ENCODE measurements at regions of chr7 and their contacts with region 1.

Region 1: GRCh38 chr7:112449902-112450806 is at the start of gene IFRD1:
- DNase-seq: peak; percentile 94
- ATAC-seq: peak; percentile 83
- H3K4me3 ChIP-seq: peak within 1 kb of the TSS; percentile 95
- H3K27ac ChIP-seq: peak within 1 kb of the TSS; percentile 92
- H3K4me1 ChIP-seq: peaks cover 4% of the 10 kb centered on the region; the same call in 1 of the 2 replicates
- H3K27me3 ChIP-seq: no peaks in the 10 kb centered on the region
- CTCF ChIP-seq: no peak
- EP300 ChIP-seq: no peak
- POLR2A ChIP-seq: peak; percentile 98
- RAD21 ChIP-seq: no peak
- polyA plus RNA-seq, gene IFRD1: 9.6 to 12.0 TPM

Region 2: GRCh38 chr7:112206238-112207044 is 243.7 kb before region 1 on chr7 and contains the starts of genes DOCK4 and ZNF277:
- CTCF ChIA-PET with region 1: interaction called, 4 read pairs
- POLR2A ChIA-PET with region 1: interaction called, 7 read pairs
- RAD21 ChIA-PET with region 1: interaction called, 3 read pairs
- SMC1A ChIA-PET with region 1: interaction called, 3 read pairs
- in situ Hi-C with region 1: loop called (anchors 5 kb)
- intact Hi-C with region 1: loop called (anchors 2 kb)
- DNase-seq: peak; percentile 94
- ATAC-seq: peak; percentile 94
- H3K4me3 ChIP-seq: peak within 1 kb of the TSS; percentile 94
- H3K27ac ChIP-seq: peak within 1 kb of the TSS; percentile 63
- H3K4me1 ChIP-seq: no peaks in the 10 kb centered on the region; the same call in 1 of the 2 replicates
- H3K27me3 ChIP-seq: no peaks in the 10 kb centered on the region
- CTCF ChIP-seq: no peak
- EP300 ChIP-seq: no peak
- POLR2A ChIP-seq: peak; percentile 69
- RAD21 ChIP-seq: no peak
- polyA plus RNA-seq, gene DOCK4: 0.03 to 0.05 TPM
- polyA plus RNA-seq, gene ZNF277: 23.5 to 28.7 TPM

Region 3: GRCh38 chr7:112398534-112398933 is 51.6 kb before region 1 on chr7:
- CTCF ChIA-PET with region 1: no interaction called
- POLR2A ChIA-PET with region 1: no interaction called
- RAD21 ChIA-PET with region 1: no interaction called
- SMC1A ChIA-PET with region 1: no interaction called
- in situ Hi-C with region 1: no loop called
- intact Hi-C with region 1: no loop called
- DNase-seq: no peak
- ATAC-seq: no peak
- H3K4me3 ChIP-seq: no peak overlapping the region
- H3K27ac ChIP-seq: no peak overlapping the region
- H3K4me1 ChIP-seq: no peaks in the 10 kb centered on the region
- H3K27me3 ChIP-seq: no peaks in the 10 kb centered on the region; a peak in 1 of 4 replicates
- CTCF ChIP-seq: no peak
- EP300 ChIP-seq: no peak
- POLR2A ChIP-seq: no peak
- RAD21 ChIP-seq: no peak

Region 4: DNA sequence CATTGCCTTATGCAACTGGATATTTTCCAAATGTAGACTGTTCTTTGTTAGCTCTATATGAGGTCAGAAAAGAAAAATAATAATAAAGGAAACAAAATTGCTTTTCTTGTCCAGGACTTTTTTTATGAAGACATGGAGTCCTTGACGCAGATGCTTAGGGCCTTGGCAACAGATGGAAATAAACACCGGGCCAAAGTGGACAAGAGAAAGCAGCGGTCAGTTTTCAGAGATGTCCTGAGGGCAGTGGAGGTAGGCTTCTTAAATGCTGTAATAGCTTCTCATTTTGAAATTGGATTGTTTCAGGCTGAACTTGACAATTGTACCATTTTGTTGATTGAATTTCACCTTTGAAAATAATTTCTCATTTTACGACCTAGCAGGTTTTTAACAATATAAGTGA is 17.7 kb after region 1 on chr7:
- CTCF ChIA-PET with region 1: interaction called, 3 read pairs
- POLR2A ChIA-PET with region 1: interaction called, 4 read pairs
- RAD21 ChIA-PET with region 1: interaction called, 4 read pairs
- SMC1A ChIA-PET with region 1: interaction called, 10 read pairs
- in situ Hi-C with region 1: no loop called
- intact Hi-C with region 1: no loop called
- DNase-seq: no peak
- ATAC-seq: no peak
- H3K4me3 ChIP-seq: no peak overlapping the region
- H3K27ac ChIP-seq: no peak overlapping the region
- H3K4me1 ChIP-seq: no peaks in the 10 kb centered on the region
- H3K27me3 ChIP-seq: no peaks in the 10 kb centered on the region
- CTCF ChIP-seq: no peak
- EP300 ChIP-seq: no peak
- POLR2A ChIP-seq: no peak
- RAD21 ChIP-seq: no peak

Region 5: GRCh38 chr7:112770084-112770483 is 319.9 kb after region 1 on chr7:
- CTCF ChIA-PET with region 1: no interaction called
- POLR2A ChIA-PET with region 1: no interaction called
- RAD21 ChIA-PET with region 1: no interaction called
- SMC1A ChIA-PET with region 1: no interaction called
- in situ Hi-C with region 1: no loop called
- intact Hi-C with region 1: loop called (anchors 5 kb)
- DNase-seq: no peak
- ATAC-seq: peak; percentile 47; the same call in 2 of the 3 replicates
- H3K4me3 ChIP-seq: no peak overlapping the region
- H3K27ac ChIP-seq: no peak overlapping the region
- H3K4me1 ChIP-seq: no peaks in the 10 kb centered on the region
- H3K27me3 ChIP-seq: no peaks in the 10 kb centered on the region
- CTCF ChIP-seq: no peak
- EP300 ChIP-seq: no peak
- POLR2A ChIP-seq: no peak
- RAD21 ChIP-seq: no peak